ENCODE measurements at regions of chr14 and their contacts with region 1.

Region 1: GRCh38 chr14:50954811-50955372 is 10.6 kb upstream of the PYGL start:
- DNase-seq: peak; percentile 61 to 79
- ATAC-seq: peak; percentile 73 to 79; a peak in 5 of 6 replicates
- H3K4me3 ChIP-seq: peak overlapping the region; percentile 9; the same call in 1 of the 3 replicates
- H3K27ac ChIP-seq: peak overlapping the region; percentile 89 to 92
- H3K4me1 ChIP-seq: peaks cover 20% of the 10 kb centered on the region
- CTCF ChIP-seq: peak; percentile 76
- EP300 ChIP-seq: no peak
- POLR2A ChIP-seq: no peak
- RAD21 ChIP-seq: peak; percentile 80 to 83

Region 2: DNA sequence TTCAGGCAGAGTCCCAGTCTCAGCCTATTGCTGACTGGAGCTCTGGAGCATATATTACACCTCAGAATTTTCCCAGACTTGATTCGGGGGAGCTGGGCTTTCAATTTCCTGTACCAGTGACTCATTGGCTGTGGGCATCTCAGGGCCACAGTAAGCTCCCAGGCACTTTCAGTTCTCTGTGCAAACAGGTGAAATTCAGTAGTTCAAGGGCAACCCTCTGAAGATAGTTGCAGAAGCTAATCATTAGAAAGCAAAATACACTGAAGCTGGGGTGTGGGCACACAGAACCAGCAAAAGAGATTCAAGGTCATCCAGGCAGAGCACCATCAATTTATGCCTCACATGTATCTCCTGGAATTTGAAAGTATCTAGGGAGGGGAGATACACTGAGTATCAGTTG is 115.8 kb before region 1 on chr14:
- CTCF ChIA-PET with region 1: no interaction called
- POLR2A ChIA-PET with region 1: no interaction called
- DNase-seq: no peak
- ATAC-seq: no peak; a peak in 1 of 6 replicates
- H3K4me3 ChIP-seq: no peak overlapping the region
- H3K27ac ChIP-seq: no peak overlapping the region
- H3K4me1 ChIP-seq: no peaks in the 10 kb centered on the region; the same call in 2 of the 3 replicates
- CTCF ChIP-seq: no peak
- EP300 ChIP-seq: no peak
- POLR2A ChIP-seq: no peak
- RAD21 ChIP-seq: no peak

Region 3: DNA sequence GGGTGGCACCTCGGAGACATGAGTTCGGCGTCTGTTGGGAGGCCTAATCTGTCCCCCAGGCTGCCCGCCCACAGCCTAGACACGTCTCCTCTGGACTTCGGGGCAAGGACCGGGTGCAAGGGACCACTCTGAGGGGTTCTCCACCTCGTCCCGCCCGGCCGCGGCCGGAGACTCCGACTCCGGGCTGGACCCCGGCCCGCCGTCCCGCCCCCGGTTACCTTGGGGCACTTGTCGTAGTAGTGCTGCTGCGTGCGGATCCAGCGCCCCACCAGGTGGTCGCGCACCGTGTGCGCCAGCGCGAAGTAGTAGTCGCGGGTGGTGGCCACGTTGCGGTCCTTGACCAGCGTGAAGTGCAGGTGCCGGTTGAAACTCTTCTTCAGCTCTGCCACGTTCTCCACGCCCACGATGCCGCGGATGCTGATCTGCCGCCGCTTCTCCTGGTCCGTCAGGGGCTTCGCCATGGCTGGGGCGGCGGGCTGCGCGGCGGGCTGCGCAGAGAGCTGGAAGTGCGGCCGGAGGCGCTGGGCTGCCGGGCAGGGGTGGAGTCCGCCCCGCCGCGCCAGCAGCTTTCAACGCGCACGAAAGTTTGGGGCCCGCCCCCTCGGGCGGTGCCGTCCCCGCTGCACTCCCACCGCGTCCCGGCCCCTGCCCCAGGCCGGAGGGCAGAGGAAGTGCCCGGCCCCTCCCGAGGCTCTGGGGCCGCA is 10.8 kb before region 1 on chr14 and contains the start of gene PYGL:
- CTCF ChIA-PET with region 1: interaction called, 29 read pairs
- POLR2A ChIA-PET with region 1: interaction called, 21 read pairs
- DNase-seq: peak; percentile 65 to 77
- ATAC-seq: peak; percentile 91 to 92
- H3K4me3 ChIP-seq: peak within 1 kb of the TSS; percentile 90
- H3K27ac ChIP-seq: peak within 1 kb of the TSS; percentile 85 to 95
- H3K4me1 ChIP-seq: peaks cover 13% of the 10 kb centered on the region
- CTCF ChIP-seq: no peak
- EP300 ChIP-seq: no peak
- POLR2A ChIP-seq: peak; percentile 87
- RAD21 ChIP-seq: no peak
- polyA plus RNA-seq, gene PYGL: 119 and 122 TPM in 2 replicates

Region 4: GRCh38 chr14:50967790-50968189 is 12.9 kb after region 1 on chr14:
- CTCF ChIA-PET with region 1: interaction called, 10 read pairs
- POLR2A ChIA-PET with region 1: interaction called, 8 read pairs
- DNase-seq: no peak
- ATAC-seq: no peak
- H3K4me3 ChIP-seq: no peak overlapping the region
- H3K27ac ChIP-seq: 0 out of 6 replicates have a peak overlapping the region, but pooled peaks of 1 of the 2 experiments have one; percentile 23
- H3K4me1 ChIP-seq: peaks cover 23% of the 10 kb centered on the region
- CTCF ChIP-seq: no peak
- EP300 ChIP-seq: no peak
- POLR2A ChIP-seq: no peak
- RAD21 ChIP-seq: no peak

Region 5: DNA sequence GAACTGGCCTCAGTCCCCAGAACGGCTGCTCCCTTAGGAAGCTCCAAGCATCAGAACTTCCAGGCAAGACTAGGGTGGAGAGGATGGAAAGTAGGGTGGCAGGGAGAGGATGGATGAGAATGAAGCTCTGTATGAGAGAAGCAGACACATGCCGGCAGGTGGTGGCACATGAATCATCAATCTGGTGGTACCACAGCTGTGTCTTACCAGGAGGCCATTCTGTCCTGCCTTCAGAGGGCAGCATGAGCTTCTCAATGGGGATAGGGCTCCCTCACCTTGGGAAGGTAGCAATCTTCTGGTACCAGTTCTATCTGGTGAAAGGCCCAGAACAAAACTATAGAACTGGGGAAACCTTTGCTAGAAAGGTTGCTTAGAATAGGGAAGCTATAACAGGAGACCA is 44.8 kb after region 1 on chr14:
- CTCF ChIA-PET with region 1: interaction called, 16 read pairs
- POLR2A ChIA-PET with region 1: interaction called, 7 read pairs
- DNase-seq: peak in 1 of 2 experiments; percentile 55
- ATAC-seq: peak; percentile 23 to 68; a peak in 3 of 6 replicates
- H3K4me3 ChIP-seq: no peak overlapping the region
- H3K27ac ChIP-seq: 0 out of 6 replicates have a peak overlapping the region, but pooled peaks of 1 of the 2 experiments have one; percentile 8
- H3K4me1 ChIP-seq: peaks cover 25% of the 10 kb centered on the region
- CTCF ChIP-seq: peak; percentile 36; the same call in 2 of the 3 replicates
- EP300 ChIP-seq: no peak
- POLR2A ChIP-seq: no peak
- RAD21 ChIP-seq: peak; percentile 55 to 63

Region 6: DNA sequence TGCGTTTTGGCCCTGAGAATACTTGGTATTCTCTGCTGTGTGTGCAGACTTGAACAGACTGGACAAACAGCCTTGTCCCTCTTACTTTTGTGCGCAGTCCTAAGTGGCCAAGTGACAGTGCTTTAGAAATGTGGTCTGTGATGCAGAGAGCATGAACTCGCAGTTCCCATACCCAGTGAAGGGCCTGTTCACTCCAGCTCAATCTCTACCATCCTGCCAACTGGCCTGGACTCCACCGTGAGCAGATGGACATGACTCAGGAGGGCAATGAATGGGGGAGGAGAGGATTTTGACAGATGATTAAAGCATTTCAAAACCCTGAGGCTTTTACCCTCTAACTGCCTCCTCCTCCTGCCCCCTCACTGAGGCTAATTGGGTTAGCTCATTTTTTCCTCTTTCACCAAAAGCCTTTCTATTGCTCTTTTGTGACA is 51.9 kb after region 1 on chr14:
- CTCF ChIA-PET with region 1: interaction called, 16 read pairs
- POLR2A ChIA-PET with region 1: interaction called, 7 read pairs
- DNase-seq: peak; percentile 21 to 57
- ATAC-seq: peak; percentile 46 to 69; a peak in 4 of 6 replicates
- H3K4me3 ChIP-seq: 0 out of 3 replicates have a peak overlapping the region, but pooled peaks have one; percentile 10
- H3K27ac ChIP-seq: peak overlapping the region; percentile 93 to 98
- H3K4me1 ChIP-seq: peaks cover 50% of the 10 kb centered on the region
- CTCF ChIP-seq: no peak
- EP300 ChIP-seq: peak in 1 of 2 experiments; percentile 23; a peak in 1 of 5 replicates
- POLR2A ChIP-seq: no peak
- RAD21 ChIP-seq: peak in 1 of 2 experiments; percentile 27; a peak in 1 of 5 replicates

Region 7: DNA sequence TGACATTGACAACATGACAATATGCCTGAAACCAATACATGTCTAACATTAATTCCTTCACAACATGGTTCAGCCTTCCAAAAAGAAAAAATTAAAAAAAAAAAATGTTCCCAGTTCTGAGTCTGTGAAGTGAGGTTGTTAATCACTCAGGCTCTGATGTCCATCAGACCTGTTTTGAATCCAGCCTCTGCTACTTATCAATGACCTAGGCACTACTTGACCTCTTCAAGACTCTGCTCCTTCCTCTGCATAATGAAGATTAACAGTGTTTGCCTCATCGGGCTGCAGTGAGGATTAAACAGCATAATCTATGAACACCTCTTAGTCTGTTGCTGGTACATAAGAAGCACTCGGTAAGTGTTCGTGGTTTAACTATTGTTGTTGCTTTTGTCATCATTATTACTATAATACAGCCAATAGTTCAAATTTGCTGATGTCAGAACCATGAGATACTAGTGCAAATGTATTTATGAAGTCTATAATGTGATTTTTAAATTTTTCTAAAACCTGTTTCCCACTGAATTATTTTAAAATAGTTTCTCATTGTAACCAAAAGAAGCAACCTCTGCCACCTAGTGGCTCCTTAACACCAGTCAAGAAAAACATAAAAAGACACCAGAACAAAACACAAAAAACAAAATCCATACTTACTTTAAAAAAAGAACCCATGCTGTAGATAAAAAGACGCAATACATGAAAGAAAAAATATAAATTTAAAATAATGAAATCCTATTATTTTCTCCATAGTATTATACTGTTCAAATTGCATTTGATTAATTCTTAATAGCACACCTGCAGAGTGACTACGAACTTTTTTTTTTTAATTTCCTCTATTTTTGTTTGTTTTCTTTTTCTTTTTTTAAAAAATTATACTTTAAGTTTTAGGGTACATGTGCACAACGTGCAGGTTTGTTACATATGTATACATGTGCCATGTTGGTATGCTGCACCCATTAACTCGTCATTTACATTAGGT is 264.9 kb after region 1 on chr14:
- CTCF ChIA-PET with region 1: interaction called, 11 read pairs
- POLR2A ChIA-PET with region 1: no interaction called
- DNase-seq: peak; percentile 10 to 50
- ATAC-seq: no peak
- H3K4me3 ChIP-seq: no peak overlapping the region
- H3K27ac ChIP-seq: 0 out of 6 replicates have a peak overlapping the region, but pooled peaks of 1 of the 2 experiments have one; percentile 0
- H3K4me1 ChIP-seq: no peaks in the 10 kb centered on the region
- CTCF ChIP-seq: peak; percentile 83
- EP300 ChIP-seq: no peak
- POLR2A ChIP-seq: no peak
- RAD21 ChIP-seq: peak; percentile 76 to 82